ENCODE measurements at regions of chr2 and their contacts with region 1.

Region 1: DNA sequence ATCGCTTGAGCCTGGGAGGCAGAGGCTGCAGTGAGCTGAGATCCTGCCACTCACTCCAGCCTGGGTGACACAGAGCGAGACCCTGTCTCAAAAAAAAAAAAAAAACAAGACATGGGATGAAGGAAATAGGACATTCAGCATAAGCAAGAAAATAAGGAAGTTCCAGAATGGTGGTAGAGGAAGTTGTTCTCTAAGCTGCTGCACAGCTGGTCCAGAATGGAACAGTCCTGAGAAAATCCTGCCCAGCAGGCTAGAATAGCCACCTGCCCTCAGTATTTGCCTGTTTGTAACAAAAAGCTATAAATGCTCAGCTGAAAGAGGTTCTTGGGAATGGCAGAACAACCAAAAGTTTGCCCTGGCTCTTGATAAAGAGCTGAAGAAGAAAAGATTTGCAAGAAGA is 11.1 kb upstream of the MAPRE3 start:
- DNase-seq: no peak
- H3K4me3 ChIP-seq: no peak overlapping the region
- H3K4me3 Mint-ChIP-seq: no peak overlapping the region
- H3K27ac Mint-ChIP-seq: no peak overlapping the region
- H3K4me1 ChIP-seq: 0 out of 2 replicates have a peak, but pooled peaks cover under 1% of the 10 kb centered on the region
- H3K4me1 Mint-ChIP-seq: no peaks in the 10 kb centered on the region
- H3K27me3 ChIP-seq: no peaks in the 10 kb centered on the region
- H3K27me3 Mint-ChIP-seq: peaks cover 25% of the 10 kb centered on the region
- CTCF ChIP-seq: no peak

Region 2: GRCh38 chr2:26933431-26934334 is 25.6 kb before region 1 on chr2:
- CTCF ChIA-PET with region 1: no interaction called
- POLR2A ChIA-PET with region 1: no interaction called
- intact Hi-C with region 1: no loop called
- DNase-seq: no peak
- H3K4me3 ChIP-seq: no peak overlapping the region
- H3K4me3 Mint-ChIP-seq: no peak overlapping the region
- H3K27ac Mint-ChIP-seq: no peak overlapping the region
- H3K4me1 ChIP-seq: no peaks in the 10 kb centered on the region
- H3K4me1 Mint-ChIP-seq: peaks cover 6% of the 10 kb centered on the region
- H3K27me3 ChIP-seq: no peaks in the 10 kb centered on the region
- H3K27me3 Mint-ChIP-seq: no peaks in the 10 kb centered on the region
- CTCF ChIP-seq: no peak

Region 3: DNA sequence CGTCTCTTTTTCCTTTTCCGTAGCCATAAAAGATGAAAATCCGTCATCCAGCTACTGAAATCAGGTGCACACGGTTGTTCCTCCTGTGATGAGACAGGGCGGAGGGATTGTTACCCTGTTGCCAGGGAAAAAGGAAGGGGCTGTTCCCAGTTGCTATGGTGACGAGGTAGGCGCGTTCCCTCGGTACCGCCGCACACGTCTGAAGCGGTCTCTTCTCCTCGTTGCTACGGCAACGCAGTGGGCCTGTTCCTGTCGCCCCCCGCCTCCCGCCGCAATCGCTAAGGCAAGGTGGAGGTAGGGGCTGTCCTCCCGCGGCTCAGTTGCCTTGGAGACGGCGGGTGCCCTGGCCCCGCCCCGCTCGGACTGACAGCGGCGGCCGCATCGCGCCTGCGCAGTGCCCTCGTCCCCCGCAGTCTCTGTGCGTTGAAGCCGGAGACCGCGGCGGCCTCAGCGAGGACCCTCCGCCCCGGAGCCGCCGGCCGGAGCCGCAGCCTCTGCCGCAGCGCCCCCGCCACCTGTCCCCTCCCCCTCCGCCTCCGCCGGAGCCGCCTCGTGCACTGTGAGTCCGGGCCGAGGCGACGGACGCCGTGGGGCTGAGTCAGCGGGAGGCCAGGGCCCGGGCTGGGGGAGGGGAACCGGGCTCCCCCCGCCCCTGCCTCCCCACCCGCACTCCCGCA is 11.1 kb after region 1 on chr2 and contains the start of gene MAPRE3:
- CTCF ChIA-PET with region 1: interaction called, 12 read pairs
- POLR2A ChIA-PET with region 1: no interaction called
- intact Hi-C with region 1: no loop called
- DNase-seq: peak; percentile 82 to 91
- H3K4me3 ChIP-seq: peak within 1 kb of the TSS; percentile 94
- H3K4me3 Mint-ChIP-seq: peak within 1 kb of the TSS; percentile 63
- H3K27ac Mint-ChIP-seq: peak within 1 kb of the TSS; percentile 68
- H3K4me1 ChIP-seq: 0 out of 2 replicates have a peak, but pooled peaks cover 3% of the 10 kb centered on the region
- H3K4me1 Mint-ChIP-seq: peaks cover 13% of the 10 kb centered on the region
- H3K27me3 ChIP-seq: peaks cover 1% of the 10 kb centered on the region; the same call in 1 of the 2 replicates
- H3K27me3 Mint-ChIP-seq: peaks cover 12% of the 10 kb centered on the region
- CTCF ChIP-seq: no peak
- total RNA-seq, gene MAPRE3: 4.9 and 5.7 TPM in 2 replicates

Region 4: DNA sequence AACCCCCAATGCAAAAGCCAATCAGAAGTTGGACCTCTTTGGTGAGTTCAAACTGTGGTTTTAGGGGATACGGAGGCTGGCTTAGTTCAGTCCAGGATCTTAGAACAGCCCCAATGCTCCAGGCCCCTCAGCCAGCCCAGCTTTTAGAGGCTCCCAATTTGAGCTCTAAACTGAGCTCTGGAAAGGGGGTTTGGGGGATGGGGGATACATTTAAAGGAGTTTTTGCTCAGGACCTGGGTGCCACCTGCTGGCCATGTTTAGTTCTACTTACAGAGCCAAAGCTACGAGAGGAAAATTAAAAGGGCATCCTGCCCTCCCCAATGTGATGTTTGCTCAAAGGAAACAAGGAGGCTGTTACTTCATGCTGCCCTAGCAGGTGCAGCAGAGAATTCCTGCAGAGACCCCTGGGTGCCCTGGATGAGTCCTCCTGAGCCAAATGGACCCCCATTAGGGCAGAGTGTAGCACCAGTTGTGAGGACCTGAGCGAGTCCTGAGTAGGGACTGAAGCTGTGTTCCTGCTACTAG is 57.5 kb after region 1 on chr2:
- CTCF ChIA-PET with region 1: interaction called, 186 read pairs
- POLR2A ChIA-PET with region 1: interaction called, 6 read pairs
- intact Hi-C with region 1: loop called (anchors 1 kb)
- DNase-seq: peak; percentile 72 to 73
- H3K4me3 ChIP-seq: no peak overlapping the region
- H3K4me3 Mint-ChIP-seq: no peak overlapping the region
- H3K27ac Mint-ChIP-seq: no peak overlapping the region
- H3K4me1 ChIP-seq: peaks cover 31% of the 10 kb centered on the region
- H3K4me1 Mint-ChIP-seq: peaks cover 23% of the 10 kb centered on the region
- H3K27me3 ChIP-seq: no peaks in the 10 kb centered on the region
- H3K27me3 Mint-ChIP-seq: no peaks in the 10 kb centered on the region
- CTCF ChIP-seq: peak; percentile 64 to 85

Region 5: GRCh38 chr2:27050281-27050995 is 91.1 kb after region 1 on chr2:
- CTCF ChIA-PET with region 1: interaction called, 21 read pairs
- POLR2A ChIA-PET with region 1: no interaction called
- intact Hi-C with region 1: loop called (anchors 1 kb)
- DNase-seq: peak; percentile 92 to 95
- H3K4me3 ChIP-seq: peak overlapping the region; percentile 96
- H3K4me3 Mint-ChIP-seq: peak overlapping the region; percentile 80
- H3K27ac Mint-ChIP-seq: peak overlapping the region; percentile 100
- H3K4me1 ChIP-seq: 0 out of 2 replicates have a peak, but pooled peaks cover 6% of the 10 kb centered on the region
- H3K4me1 Mint-ChIP-seq: peaks cover 31% of the 10 kb centered on the region
- H3K27me3 ChIP-seq: no peaks in the 10 kb centered on the region
- H3K27me3 Mint-ChIP-seq: peaks cover 10% of the 10 kb centered on the region
- CTCF ChIP-seq: peak; percentile 37 to 49

Region 6: DNA sequence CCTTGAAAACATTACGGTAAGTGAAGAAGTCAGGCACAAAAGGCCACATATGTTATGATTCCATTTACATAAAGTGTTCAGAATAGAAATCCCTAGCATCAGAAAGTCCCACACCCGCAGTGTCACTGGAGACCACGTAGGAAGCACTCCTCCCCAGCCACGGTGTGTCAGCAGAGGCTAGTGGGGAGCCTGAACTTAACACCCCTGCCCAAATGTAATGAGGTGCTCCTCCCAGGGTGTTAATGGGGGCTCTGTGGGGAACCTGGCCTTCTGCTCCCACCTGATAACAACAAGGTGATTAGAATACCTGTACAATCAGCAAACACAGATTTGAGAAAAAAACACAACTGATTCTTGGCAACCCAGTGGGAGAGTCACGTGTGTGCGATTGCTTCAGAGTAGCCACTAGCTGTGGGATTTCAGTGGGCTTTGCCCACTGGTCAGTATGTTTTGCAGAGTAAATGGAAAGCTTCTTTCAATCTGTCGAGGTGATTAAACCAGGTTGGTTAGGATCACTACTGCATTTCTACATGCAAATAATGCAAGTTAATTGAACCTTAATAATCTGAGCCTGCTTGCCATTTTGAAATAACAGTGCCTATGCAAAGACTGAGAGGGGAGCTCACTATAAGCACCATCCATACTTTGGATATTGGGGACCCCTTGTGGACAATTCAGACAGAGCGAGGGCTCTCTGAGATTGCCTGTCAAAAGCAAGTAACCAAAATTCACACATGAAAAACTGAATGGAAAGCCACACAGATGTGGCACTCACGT is 231.9 kb after region 1 on chr2:
- CTCF ChIA-PET with region 1: interaction called, 4 read pairs
- POLR2A ChIA-PET with region 1: no interaction called
- intact Hi-C with region 1: loop called (anchors 2 kb)
- DNase-seq: peak; percentile 73 to 82
- H3K4me3 ChIP-seq: no peak overlapping the region
- H3K4me3 Mint-ChIP-seq: no peak overlapping the region
- H3K27ac Mint-ChIP-seq: no peak overlapping the region
- H3K4me1 ChIP-seq: no peaks in the 10 kb centered on the region
- H3K4me1 Mint-ChIP-seq: no peaks in the 10 kb centered on the region
- H3K27me3 ChIP-seq: no peaks in the 10 kb centered on the region
- H3K27me3 Mint-ChIP-seq: no peaks in the 10 kb centered on the region
- CTCF ChIP-seq: peak; percentile 73 to 88

Measured in Caco-2 (cell line).